Left cardiac atrium (tissue), 4 donors: ENCODE measurements at regions of chr20 and their contacts with region 1.

Region 1: GRCh38 chr20:24917797-24918578 is 31.1 kb upstream of the CST7 start:
- DNase-seq: peak; percentile 74
- ATAC-seq: peak; percentile 91 to 93

Region 2: DNA sequence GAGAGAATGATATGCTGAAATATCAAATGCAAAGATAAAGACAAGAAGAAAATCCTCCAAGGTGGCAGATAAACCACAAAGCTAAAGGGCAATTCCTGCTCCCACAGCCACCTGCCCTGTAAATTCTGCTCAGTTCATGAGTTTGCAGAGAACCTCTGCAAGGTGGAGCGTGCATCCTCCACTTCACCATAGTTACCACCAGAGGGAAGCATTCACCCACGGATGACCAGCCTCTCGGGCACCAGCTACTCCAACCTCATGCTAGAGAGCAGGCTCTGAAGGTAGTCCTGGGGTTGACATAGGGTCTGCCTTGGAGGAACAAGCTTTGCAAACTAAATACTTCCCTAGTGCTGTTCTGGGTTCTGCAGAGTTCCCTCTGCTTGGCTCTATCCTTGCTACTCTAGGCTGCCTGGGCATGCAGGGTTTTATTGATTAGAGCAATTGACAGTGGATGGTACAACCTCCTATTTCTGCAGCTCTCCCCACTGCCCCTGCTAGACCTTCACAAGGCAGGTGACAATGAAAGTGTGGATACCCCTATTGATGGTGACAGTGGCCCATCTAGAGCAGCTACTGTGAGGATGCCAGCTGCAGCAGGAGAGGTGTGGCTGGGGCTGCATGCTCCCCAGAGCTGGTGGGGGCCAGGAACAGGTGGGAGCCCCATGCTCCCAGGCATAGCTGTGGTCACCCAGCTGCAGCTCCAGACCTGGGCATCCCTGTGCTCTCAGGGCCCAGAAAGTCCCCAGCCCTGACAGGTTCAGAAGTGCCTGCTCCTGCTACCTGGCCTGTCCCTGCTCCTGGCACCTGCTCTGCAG is 980.5 kb before region 1 on chr20:
- intact Hi-C with region 1: loop called in 1 of 2 experiments (anchors 5 kb)
- DNase-seq: peak; percentile 43
- ATAC-seq: peak; percentile 95 to 97

Region 3: DNA sequence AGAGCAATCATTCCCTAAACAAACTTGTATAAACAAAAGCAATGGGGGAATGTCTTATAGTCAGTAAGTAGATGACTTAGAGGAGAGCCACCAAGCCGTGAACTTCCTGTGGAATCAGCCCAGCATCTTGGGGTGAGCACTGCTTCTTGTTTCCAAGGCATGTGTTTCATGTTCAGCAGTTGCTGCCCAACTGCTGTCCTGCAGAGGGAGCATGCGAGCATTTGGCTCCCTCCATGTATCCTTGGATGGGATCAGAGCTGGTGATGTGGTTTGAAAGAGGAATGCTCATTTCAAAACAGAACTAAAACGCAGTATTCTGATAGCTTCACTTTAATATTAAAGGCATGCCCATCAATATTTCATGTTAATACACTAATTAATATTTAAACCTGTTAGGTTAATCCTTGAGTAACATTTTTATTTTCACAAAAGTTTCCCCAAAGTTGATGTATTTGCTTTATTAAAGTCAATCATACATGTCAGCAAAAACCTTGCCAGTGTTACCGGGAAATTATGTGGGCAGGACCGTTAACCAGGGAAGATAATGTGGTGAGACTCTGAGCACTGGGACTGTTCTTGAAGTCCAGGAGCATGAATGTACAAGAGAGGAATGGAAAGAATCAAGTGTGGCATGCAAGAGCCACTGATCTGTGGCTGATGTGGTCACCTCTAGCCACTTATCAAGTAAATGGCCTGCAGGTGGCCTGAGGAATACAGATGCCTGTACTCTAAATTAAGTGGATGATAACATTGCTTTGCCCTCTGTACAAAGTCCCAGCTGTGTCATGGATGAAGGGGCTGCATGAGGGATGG is 757.2 kb before region 1 on chr20:
- intact Hi-C with region 1: loop called in 1 of 2 experiments (anchors 10 kb)
- DNase-seq: peak; percentile 36
- ATAC-seq: peak; percentile 82 to 86

Region 4: GRCh38 chr20:24303381-24303780 is 614.6 kb before region 1 on chr20:
- intact Hi-C with region 1: loop called in 1 of 2 experiments (anchors 5 kb)
- DNase-seq: peak; percentile 24
- ATAC-seq: peak; percentile 41 to 44

Region 5: DNA sequence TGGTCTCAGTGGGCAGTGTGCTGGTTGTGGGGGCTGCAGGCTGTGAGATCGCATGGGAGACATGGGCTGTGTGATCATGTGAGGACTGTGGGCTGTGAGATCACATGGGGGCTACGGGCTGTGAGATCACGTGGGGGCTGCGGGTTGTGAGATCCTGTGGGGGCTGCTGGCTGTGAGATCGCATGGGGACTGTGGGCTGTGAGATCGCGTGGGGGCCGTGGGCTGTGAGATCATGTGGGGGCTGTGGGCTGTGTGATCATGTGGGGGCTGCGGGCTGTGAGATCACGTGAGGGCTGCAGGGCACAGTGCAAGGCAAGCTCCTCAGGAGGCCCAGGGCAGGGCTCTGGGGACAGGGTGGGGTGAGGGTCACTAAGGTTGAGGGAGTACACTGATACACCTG is 109.4 kb before region 1 on chr20:
- intact Hi-C with region 1: loop called in 1 of 2 experiments (anchors 10 kb)
- DNase-seq: no peak
- ATAC-seq: no peak

Region 6: GRCh38 chr20:24828992-24829648 is 88.9 kb before region 1 on chr20:
- intact Hi-C with region 1: no loop called
- DNase-seq: no peak
- ATAC-seq: no peak

Region 7: GRCh38 chr20:25017257-25018115 is 99.5 kb after region 1 on chr20:
- intact Hi-C with region 1: no loop called
- DNase-seq: peak; percentile 17
- ATAC-seq: no peak

Region 8: GRCh38 chr20:25136643-25137559 is 218.9 kb after region 1 on chr20:
- intact Hi-C with region 1: no loop called
- DNase-seq: peak; percentile 80
- ATAC-seq: peak; percentile 96 to 99